ENCODE measurements at regions of chr1 and their contacts with region 1.

Region 1: DNA sequence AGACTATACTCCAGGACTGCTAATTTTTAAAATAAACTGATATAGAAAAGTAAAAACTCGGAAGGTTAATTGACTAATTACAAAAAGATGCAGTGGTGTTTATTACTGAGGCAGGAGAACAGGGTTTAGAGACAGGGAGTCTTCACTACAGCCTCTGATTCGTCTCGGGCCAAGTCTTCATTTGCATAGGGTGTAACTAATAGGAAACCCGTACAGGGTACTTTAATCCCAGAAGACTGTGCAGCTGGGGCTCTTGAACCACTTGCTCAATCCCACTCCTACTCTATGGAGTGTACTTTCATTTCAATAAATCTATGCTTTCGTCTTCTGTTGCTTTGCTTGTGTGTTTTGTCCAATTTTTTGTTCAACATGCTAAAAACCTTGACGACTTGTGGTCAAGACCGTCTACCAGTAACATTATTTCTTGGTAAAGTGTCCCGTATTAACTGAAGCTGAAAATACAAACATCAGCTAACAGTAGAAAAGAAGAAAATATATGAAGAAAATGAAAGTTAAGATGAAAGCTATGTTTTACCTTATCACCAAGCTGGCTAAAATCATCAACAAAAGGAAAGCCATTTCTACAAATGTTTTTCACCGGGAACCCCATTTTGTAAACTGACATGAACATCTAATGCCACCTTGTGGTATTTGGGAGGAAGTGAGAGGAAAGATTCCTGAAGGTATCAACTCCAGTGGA is 8.0 kb downstream of the SDHB start:
- DNase-seq: no peak
- ATAC-seq: peak; percentile 62
- H3K4me3 ChIP-seq: 0 out of 2 replicates have a peak overlapping the region, but pooled peaks have one; percentile 40
- H3K27ac ChIP-seq: no peak overlapping the region
- H3K4me1 ChIP-seq: peaks cover 3% of the 10 kb centered on the region; the same call in 1 of the 2 replicates
- H3K27me3 ChIP-seq: no peaks in the 10 kb centered on the region
- CTCF ChIP-seq: peak; percentile 55 to 76 (median 72); a peak in 5 of 6 replicates
- EP300 ChIP-seq: no peak
- POLR2A ChIP-seq: no peak
- RAD21 ChIP-seq: peak; percentile 80

Region 2: DNA sequence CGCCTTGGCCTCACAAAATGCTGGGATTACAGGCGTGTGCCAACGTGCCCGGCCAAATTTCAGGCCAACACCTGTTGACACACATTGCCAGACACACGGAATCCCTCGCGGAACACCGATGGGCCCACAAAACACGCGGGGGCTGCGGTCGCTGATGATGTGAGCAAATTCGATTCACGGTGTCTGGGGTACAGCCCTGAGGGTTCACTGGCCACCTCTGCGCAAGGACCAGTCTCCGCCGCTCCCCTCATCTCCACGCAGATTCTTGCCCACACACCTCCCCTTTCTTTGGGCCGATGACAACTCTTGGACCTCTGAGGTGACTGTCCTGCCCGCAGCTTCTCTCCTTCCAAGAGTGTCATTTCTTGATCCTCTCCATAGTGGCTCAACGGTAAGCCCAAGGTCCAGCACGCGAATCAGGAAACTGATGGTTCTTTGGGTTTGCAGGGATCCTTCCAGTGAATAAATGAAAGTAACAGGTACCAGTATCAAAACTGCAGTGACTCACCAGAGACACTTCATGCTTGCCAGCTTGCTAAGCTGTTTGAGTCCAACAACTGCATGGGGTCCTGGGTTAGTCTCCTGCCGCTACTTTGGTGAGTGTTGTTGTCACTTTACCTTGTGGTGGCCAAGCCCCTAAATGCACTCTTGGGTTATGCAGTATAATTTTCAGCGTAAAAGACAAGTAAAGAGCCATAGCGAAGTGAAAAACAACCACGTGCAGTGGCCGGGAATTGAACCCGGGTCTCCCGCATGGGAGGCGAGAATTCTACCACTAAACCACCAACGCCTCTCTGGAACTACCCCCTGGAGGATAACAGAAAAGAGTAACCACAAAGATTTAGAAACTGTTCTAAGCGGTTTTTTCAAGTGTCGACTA is 368.0 kb before region 1 on chr1:
- CTCF ChIA-PET with region 1: no interaction called
- POLR2A ChIA-PET with region 1: no interaction called
- RAD21 ChIA-PET with region 1: no interaction called
- SMC1A ChIA-PET with region 1: no interaction called
- in situ Hi-C with region 1: no loop called
- intact Hi-C with region 1: no loop called
- DNase-seq: peak; percentile 24
- ATAC-seq: peak; percentile 87
- H3K4me3 ChIP-seq: no peak overlapping the region
- H3K27ac ChIP-seq: no peak overlapping the region
- H3K4me1 ChIP-seq: peaks cover 10% of the 10 kb centered on the region
- H3K27me3 ChIP-seq: no peaks in the 10 kb centered on the region; a peak in 2 of 4 replicates
- CTCF ChIP-seq: no peak
- EP300 ChIP-seq: no peak; a peak in 1 of 4 replicates
- POLR2A ChIP-seq: no peak
- RAD21 ChIP-seq: no peak

Region 3: GRCh38 chr1:16946646-16947045 is 99.1 kb before region 1 on chr1:
- CTCF ChIA-PET with region 1: interaction called, 50 read pairs
- POLR2A ChIA-PET with region 1: no interaction called
- RAD21 ChIA-PET with region 1: interaction called, 4 read pairs
- SMC1A ChIA-PET with region 1: interaction called, 9 read pairs
- in situ Hi-C with region 1: no loop called
- intact Hi-C with region 1: loop called (anchors 1 kb)
- DNase-seq: no peak
- ATAC-seq: no peak
- H3K4me3 ChIP-seq: no peak overlapping the region
- H3K27ac ChIP-seq: no peak overlapping the region
- H3K4me1 ChIP-seq: no peaks in the 10 kb centered on the region
- H3K27me3 ChIP-seq: no peaks in the 10 kb centered on the region
- CTCF ChIP-seq: no peak
- EP300 ChIP-seq: no peak
- POLR2A ChIP-seq: no peak
- RAD21 ChIP-seq: no peak

Region 4: DNA sequence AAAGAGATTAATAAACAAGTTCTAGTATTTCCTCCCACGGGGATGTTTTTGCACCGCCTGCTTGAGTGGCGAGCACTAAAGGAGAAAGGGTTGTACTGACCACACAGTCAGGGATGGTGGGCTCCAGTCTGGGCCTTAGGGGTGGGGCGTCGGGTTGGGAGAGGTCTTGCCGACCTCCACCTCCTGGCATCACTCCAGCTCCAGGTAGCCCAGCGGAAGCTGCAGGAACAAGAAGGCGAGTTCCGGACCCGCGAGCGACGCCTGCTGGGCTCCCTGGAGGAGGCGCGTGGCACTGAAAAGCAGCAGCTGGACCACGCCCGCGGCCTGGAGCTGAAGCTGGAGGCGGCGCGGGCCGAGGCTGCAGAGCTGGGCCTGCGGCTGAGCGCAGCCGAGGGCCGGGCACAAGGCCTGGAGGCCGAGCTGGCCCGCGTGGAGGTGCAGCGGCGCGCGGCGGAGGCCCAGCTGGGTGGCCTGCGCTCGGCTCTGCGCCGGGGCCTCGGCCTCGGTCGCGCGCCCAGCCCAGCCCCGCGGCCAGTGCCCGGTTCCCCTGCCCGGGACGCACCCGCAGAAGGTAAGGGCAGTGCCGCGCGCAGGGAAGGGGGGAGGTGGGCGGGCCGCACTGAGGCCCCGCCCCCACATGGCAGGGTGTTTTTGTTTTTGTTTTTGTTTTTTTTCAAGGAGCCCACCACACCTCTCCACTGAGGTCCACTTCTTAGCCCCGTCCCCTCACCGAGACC is 85.1 kb before region 1 on chr1:
- CTCF ChIA-PET with region 1: interaction called, 20 read pairs
- POLR2A ChIA-PET with region 1: no interaction called
- RAD21 ChIA-PET with region 1: interaction called, 8 read pairs
- SMC1A ChIA-PET with region 1: interaction called, 8 read pairs
- in situ Hi-C with region 1: loop called (anchors 5 kb)
- intact Hi-C with region 1: no loop called
- DNase-seq: peak; percentile 7
- ATAC-seq: peak; percentile 95
- H3K4me3 ChIP-seq: peak overlapping the region; percentile 43; the same call in 1 of the 2 replicates
- H3K27ac ChIP-seq: no peak overlapping the region
- H3K4me1 ChIP-seq: no peaks in the 10 kb centered on the region
- H3K27me3 ChIP-seq: no peaks in the 10 kb centered on the region
- CTCF ChIP-seq: peak; percentile 69 to 85 (median 70)
- EP300 ChIP-seq: no peak
- POLR2A ChIP-seq: no peak
- RAD21 ChIP-seq: peak; percentile 44

Region 5: DNA sequence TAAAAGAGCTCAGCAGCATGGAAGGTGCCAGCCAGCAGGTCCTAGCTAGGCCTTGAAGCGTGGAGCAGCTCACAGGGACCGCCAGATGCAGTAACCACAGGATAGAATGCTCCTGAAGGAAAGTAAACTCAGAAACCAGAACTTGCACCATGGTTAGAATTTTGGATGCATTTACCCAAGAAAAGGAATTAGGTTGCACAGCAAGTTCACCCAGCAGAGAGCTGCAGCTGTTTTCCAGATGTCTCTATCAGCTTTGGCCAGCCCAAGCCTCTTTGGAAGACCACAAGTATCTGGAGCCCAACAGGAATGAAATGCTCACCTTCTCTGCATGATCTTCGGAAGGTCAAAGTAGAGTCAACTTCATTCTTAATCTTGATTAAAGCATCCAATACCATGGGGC is 13.0 kb before region 1 on chr1:
- CTCF ChIA-PET with region 1: interaction called, 14 read pairs
- POLR2A ChIA-PET with region 1: no interaction called
- RAD21 ChIA-PET with region 1: interaction called, 3 read pairs
- SMC1A ChIA-PET with region 1: no interaction called
- in situ Hi-C with region 1: no loop called
- intact Hi-C with region 1: no loop called
- DNase-seq: no peak
- ATAC-seq: no peak
- H3K4me3 ChIP-seq: no peak overlapping the region
- H3K27ac ChIP-seq: no peak overlapping the region
- H3K4me1 ChIP-seq: no peaks in the 10 kb centered on the region
- H3K27me3 ChIP-seq: no peaks in the 10 kb centered on the region
- CTCF ChIP-seq: no peak
- EP300 ChIP-seq: no peak
- POLR2A ChIP-seq: no peak
- RAD21 ChIP-seq: no peak